ENCODE measurements at regions of chr11 and their contacts with region 1.

Region 1: DNA sequence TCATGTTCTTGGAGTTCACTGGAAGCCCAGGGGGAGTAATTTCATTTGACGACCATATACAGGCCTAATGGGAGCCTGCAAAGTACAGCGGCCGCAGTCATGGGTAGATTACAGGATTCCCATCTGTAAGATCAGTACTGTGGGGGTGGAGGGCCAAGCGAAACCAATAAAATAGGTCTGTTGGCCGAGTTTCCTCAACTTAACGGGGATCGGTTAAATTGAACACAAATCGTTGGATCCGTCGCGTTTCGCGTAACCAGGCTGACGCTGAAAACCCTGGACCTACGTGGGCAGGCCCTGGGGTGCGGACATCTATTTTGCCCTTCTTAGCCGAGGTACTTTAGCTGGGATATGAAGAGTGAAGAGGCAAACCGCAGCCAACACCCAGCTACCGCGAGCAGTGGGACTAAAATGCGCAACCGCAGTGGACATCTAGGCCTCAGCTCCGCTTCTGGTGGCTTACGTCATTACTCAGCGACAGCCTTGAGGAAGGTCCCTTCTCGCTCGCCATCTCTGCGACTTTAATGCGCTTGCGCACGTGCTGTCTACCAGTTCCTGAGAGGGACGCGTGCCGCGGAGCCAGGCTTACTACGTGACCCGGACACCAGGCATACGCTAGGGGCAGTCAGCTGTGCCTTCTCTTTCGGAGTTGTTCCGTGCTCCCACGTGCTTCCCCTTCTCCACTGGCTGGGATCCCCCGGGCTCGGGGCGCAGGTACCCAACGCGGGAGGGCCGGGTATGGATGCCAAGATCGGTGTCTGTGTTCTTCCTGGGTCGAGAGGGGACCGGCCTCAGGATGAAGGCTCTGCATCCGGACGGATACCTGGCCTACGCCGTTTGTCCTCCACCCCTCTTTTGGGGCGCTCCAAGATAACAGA is at the start of gene NAT10:
- DNase-seq: peak; percentile 97 to 99 (median 98)
- ATAC-seq: peak; percentile 97
- H3K4me3 ChIP-seq: peak within 1 kb of the TSS; percentile 93
- H3K27ac ChIP-seq: peak within 1 kb of the TSS; percentile 93 to 96
- H3K4me1 ChIP-seq: peaks cover 5 to 30% of the 10 kb centered on the region in 2 donors
- H3K27me3 ChIP-seq: no peaks in the 10 kb centered on the region
- CTCF ChIP-seq: peak in 1 of 2 donors; percentile 18
- polyA plus RNA-seq, gene NAT10: 61.2 to 69.3 (median 64.2) TPM

Region 2: DNA sequence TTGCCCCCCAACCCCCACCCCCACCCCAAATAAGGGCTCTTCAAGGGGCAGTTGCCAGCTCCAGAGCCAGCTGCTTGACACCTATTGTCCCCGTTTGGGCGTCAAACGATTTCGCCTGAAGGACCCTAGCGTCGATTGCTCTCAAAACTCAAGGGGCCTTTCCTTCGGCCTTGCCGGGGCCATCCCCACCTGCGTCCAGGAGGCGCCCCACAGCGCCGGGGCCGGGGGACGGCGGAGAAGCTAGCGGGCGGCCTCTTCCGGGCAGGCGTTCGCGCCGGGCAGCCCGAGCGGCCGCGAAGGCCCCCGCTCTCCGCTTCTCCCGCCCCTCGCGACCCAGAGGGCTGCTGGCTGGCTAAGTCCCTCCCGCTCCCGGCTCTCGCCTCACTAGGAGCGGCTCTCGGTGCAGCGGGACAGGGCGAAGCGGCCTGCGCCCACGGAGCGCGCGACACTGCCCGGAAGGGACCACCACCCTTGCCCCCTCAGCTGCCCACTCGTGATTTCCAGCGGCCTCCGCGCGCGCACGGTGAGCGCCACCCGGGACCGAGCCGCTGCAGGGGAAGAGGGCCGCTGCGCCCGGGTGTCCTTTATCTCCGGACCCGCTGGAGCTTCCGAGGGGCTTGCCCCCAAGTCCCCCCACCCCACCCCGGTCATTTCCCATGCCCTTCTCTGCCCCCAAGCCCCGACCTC is 53.8 kb before region 1 on chr11 and contains the start of gene CAPRIN1:
- intact Hi-C with region 1: loop called in 1 of 2 experiments (anchors 10 kb)
- DNase-seq: peak; percentile 90 to 96 (median 91)
- ATAC-seq: peak; percentile 91
- H3K4me3 ChIP-seq: peak within 1 kb of the TSS; percentile 97 to 99
- H3K27ac ChIP-seq: peak within 1 kb of the TSS; percentile 99 to 100
- H3K4me1 ChIP-seq: peaks cover 16 to 32% of the 10 kb centered on the region in 2 donors
- H3K27me3 ChIP-seq: no peaks in the 10 kb centered on the region
- CTCF ChIP-seq: peak in 1 of 2 donors; percentile 1
- polyA plus RNA-seq, gene CAPRIN1: 213 to 263 (median 255) TPM

Measured in left lung (tissue), 14 donors.